A673 (cell line): ENCODE measurements at regions of chr6 and their contacts with region 1.

Region 1: GRCh38 chr6:35507221-35507620 is 5.5 kb downstream of the TULP1 start:
- DNase-seq: no peak
- H3K4me3 ChIP-seq: no peak overlapping the region
- H3K27ac ChIP-seq: no peak overlapping the region
- H3K4me1 ChIP-seq: no peaks in the 10 kb centered on the region
- H3K27me3 ChIP-seq: no peaks in the 10 kb centered on the region
- CTCF ChIP-seq: no peak

Region 2: GRCh38 chr6:35496841-35497570 is 10.2 kb before region 1 on chr6 and contains the start of gene TEAD3:
- CTCF ChIA-PET with region 1: interaction called, 10 read pairs
- POLR2A ChIA-PET with region 1: no interaction called
- intact Hi-C with region 1: no loop called
- DNase-seq: peak; percentile 56
- H3K4me3 ChIP-seq: peak within 1 kb of the TSS; percentile 71
- H3K27ac ChIP-seq: peak within 1 kb of the TSS; percentile 78
- H3K4me1 ChIP-seq: peaks cover 36% of the 10 kb centered on the region
- H3K27me3 ChIP-seq: no peaks in the 10 kb centered on the region
- CTCF ChIP-seq: peak; percentile 14; the same call in 1 of the 2 replicates
- total RNA-seq, gene TEAD3: 10.3 and 17.0 TPM in 2 replicates